Panc1 (cell line): ENCODE measurements at regions of chr20 and their contacts with region 1.

Region 1: DNA sequence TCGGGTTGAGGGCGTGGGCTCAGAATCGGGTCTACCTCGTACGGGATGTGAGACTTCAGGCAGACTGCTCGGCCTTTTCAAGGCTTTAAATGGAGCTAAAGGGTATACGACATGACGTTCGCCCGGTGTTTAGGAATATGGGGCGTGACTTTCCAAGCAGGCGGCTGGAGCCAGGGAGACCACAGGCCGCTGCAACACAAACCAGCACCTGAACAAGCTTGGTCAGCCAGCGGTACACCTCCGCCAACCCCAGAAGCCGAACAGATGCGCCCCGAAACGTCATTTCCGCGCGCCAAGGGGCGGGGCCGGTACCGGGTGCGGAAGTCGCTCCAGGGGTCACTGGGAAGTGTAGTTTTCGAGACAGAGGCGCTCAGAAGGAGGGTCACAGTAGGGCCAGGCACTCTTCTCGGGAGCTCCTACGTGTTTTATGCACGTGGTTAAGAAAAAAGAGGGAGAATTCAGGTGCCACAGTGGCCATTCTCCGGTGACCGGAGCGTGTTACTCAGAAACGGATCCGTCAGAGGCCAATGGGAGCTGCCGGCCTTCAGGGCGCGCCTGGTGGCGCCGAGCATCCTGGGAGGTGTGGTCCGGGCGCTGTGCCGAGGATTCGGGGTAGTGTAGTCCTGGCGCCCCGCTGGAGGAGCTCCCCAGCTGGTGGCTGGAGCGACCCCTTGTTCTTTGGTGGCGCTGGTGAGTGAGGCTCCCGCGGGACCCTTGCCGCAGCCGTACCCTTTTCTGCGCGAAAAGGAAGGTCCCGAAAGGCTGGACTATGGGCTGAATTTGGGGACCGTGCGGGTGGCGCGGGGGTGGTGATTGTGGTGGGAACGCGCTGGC is at the start of gene ZNF133:
- DNase-seq: peak; percentile 87
- ATAC-seq: peak; percentile 98
- H3K4me3 ChIP-seq: peak within 1 kb of the TSS; percentile 95
- H3K27ac ChIP-seq: peak within 1 kb of the TSS; percentile 90
- H3K4me1 ChIP-seq: peaks cover 2% of the 10 kb centered on the region; the same call in 1 of the 2 replicates
- H3K27me3 ChIP-seq: no peaks in the 10 kb centered on the region
- CTCF ChIP-seq: peak; percentile 9; the same call in 1 of the 2 replicates
- total RNA-seq, gene ZNF133: 8.2 TPM

Region 2: DNA sequence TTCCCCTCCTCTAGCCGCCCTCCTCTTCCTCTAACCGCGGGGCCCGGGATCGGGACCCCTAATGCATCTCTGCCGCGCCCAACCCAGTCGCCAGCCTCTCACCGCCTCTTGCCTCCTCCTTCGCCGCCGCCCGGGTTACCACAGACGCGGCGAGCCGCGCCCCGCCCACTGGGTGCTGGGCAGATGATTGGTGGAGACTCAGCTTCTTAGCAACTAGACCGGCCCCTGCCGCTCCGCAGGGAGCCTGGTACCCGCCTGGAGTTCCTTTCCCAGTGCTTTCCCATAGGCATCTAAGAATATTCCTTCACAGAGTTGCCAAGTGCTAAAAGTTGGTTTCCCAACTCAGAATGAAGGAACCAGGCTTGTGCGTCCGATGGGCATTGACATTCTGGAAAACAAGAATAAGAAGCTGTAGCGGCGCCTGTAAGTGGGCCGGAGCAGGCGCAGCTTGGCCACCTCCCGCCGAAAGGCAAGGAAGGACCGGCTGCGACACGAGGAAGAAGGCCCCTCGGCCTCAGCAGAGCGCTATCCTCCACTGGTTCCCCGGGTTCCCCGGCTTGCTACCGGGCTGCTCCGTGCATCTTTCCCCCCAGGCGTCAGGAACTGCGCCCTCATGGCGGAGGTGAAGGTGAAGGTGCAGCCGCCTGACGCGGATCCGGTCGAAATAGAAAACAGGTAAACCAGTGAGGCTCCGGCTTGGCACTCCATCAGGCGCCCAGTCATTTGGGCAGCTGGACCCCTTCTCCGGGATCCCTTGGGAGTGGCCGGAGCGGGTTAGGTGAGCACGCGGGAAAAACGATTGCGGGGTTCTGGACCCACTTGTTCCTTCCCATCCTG is 179.0 kb after region 1 on chr20 and contains the starts of genes DZANK1 and POLR3F:
- CTCF ChIA-PET with region 1: no interaction called
- POLR2A ChIA-PET with region 1: no interaction called
- in situ Hi-C with region 1: no loop called
- intact Hi-C with region 1: loop called (anchors 5 kb)
- DNase-seq: peak; percentile 93
- ATAC-seq: peak; percentile 100
- H3K4me3 ChIP-seq: peak within 1 kb of the TSS; percentile 98 to 99
- H3K27ac ChIP-seq: peak within 1 kb of the TSS; percentile 90
- H3K4me1 ChIP-seq: peaks cover 18% of the 10 kb centered on the region
- H3K27me3 ChIP-seq: no peaks in the 10 kb centered on the region
- CTCF ChIP-seq: no peak
- total RNA-seq, gene DZANK1: 3.0 TPM
- total RNA-seq, gene POLR3F: 11.1 TPM